ENCODE measurements at regions of chr3 and their contacts with region 1.

Region 1: GRCh38 chr3:113495035-113495434 is 19.9 kb downstream of the SPICE1 start:
- DNase-seq: peak; percentile 36
- H3K4me3 Mint-ChIP-seq: no peak overlapping the region
- H3K27ac Mint-ChIP-seq: no peak overlapping the region
- H3K4me1 Mint-ChIP-seq: no peaks in the 10 kb centered on the region
- H3K27me3 Mint-ChIP-seq: no peaks in the 10 kb centered on the region
- CTCF ChIP-seq: no peak

Region 2: DNA sequence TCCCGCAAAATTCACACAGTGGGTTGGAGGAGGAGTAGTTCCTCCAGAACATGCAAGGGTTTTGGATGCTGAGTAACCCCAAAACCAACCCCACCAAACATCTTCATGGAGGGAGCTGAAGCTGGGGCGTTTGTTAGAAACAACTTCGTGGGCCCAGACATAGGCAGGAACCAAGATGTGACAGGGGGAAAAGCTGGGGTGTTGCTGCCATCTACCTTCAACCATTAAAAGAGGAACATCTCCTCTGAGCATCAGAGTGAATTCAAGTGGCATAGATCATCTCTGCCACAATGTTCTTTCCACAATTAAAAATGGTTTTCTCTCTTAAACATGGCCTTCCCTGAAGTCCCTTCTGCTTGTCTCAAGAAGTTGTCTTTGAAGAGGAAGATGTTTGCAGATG is 57.8 kb after region 1 on chr3:
- CTCF ChIA-PET with region 1: interaction called, 3 read pairs
- intact Hi-C with region 1: loop called (anchors 1 kb)
- DNase-seq: no peak
- H3K4me3 Mint-ChIP-seq: no peak overlapping the region
- H3K27ac Mint-ChIP-seq: no peak overlapping the region
- H3K4me1 Mint-ChIP-seq: peaks cover 31% of the 10 kb centered on the region
- H3K27me3 Mint-ChIP-seq: no peaks in the 10 kb centered on the region
- CTCF ChIP-seq: no peak

Region 3: DNA sequence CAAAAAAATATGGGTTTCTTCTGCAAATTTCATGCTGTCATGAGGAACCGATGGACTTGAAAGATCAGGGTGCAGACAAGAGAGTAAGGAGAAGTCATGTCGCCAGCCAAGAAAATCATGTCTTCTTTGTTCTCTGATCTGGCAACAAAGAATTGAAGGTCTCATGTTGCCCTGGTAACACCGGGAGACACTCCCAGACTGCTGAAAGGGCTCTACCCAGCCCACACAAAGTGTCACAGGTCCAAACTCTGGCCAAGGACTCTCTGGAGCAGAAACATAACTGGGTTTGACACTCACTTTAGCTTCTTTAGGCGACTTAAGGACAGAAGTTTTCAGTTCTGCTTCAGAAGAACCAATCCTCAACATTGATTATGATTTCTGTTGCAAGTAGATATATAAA is 80.2 kb after region 1 on chr3:
- CTCF ChIA-PET with region 1: interaction called, 19 read pairs
- intact Hi-C with region 1: loop called (anchors 1 kb)
- DNase-seq: no peak
- H3K4me3 Mint-ChIP-seq: no peak overlapping the region
- H3K27ac Mint-ChIP-seq: no peak overlapping the region
- H3K4me1 Mint-ChIP-seq: peaks cover 17% of the 10 kb centered on the region
- H3K27me3 Mint-ChIP-seq: peaks cover 47% of the 10 kb centered on the region
- CTCF ChIP-seq: no peak

Region 4: DNA sequence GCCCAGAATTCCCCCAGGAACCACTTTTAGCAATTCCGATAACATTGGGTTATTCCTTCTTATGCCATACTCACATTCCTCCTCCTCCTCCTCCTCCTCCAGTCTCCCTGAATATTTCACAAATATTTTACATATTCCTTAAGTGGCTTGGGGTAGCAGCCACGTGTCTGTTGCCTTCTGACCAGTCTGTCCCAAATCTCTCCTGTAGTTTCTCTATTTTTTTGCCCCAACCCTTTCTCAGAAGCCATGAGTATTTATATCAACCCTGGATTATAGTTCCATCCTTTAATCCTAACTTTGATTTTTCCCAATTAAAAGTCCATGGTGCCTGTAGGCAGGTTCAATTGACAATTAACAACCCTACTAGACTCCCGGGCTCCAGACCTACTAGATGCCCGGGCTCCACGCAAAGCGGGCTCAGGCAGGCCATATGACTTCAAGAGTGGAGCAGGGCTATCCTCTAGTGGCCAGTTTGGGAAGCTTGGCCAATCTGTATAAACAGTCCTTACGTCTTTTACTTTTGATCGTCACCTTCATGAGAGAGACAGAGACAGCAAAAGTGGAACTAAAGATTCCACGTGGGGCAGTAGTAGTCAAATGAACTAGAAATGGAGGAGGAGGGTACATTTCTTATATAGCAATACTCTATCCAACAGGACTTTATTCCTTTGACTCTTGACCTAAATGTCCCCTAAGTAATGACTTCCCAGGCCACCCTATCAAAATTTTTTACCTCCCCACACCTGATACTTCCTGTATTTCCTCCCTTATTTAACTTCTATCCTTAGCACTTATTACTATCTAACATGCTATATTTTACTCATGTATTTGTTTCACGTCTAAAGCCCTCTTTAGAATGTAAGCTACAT is 131.7 kb after region 1 on chr3:
- CTCF ChIA-PET with region 1: interaction called, 5 read pairs
- intact Hi-C with region 1: loop called (anchors 1 kb)
- DNase-seq: peak; percentile 63
- H3K4me3 Mint-ChIP-seq: no peak overlapping the region
- H3K27ac Mint-ChIP-seq: no peak overlapping the region
- H3K4me1 Mint-ChIP-seq: peaks cover 7% of the 10 kb centered on the region
- H3K27me3 Mint-ChIP-seq: peaks cover 8% of the 10 kb centered on the region
- CTCF ChIP-seq: peak; percentile 59

Region 5: GRCh38 chr3:113745273-113746068 is 250.4 kb after region 1 on chr3:
- CTCF ChIA-PET with region 1: no interaction called
- intact Hi-C with region 1: loop called (anchors 5 kb)
- DNase-seq: peak; percentile 76
- H3K4me3 Mint-ChIP-seq: peak overlapping the region; percentile 100
- H3K27ac Mint-ChIP-seq: peak overlapping the region; percentile 97
- H3K4me1 Mint-ChIP-seq: peaks cover 34% of the 10 kb centered on the region
- H3K27me3 Mint-ChIP-seq: no peaks in the 10 kb centered on the region
- CTCF ChIP-seq: no peak

Measured in Calu3 (cell line).